Panc1 (cell line): ENCODE measurements at regions of chr11 and their contacts with region 1.

Region 1: DNA sequence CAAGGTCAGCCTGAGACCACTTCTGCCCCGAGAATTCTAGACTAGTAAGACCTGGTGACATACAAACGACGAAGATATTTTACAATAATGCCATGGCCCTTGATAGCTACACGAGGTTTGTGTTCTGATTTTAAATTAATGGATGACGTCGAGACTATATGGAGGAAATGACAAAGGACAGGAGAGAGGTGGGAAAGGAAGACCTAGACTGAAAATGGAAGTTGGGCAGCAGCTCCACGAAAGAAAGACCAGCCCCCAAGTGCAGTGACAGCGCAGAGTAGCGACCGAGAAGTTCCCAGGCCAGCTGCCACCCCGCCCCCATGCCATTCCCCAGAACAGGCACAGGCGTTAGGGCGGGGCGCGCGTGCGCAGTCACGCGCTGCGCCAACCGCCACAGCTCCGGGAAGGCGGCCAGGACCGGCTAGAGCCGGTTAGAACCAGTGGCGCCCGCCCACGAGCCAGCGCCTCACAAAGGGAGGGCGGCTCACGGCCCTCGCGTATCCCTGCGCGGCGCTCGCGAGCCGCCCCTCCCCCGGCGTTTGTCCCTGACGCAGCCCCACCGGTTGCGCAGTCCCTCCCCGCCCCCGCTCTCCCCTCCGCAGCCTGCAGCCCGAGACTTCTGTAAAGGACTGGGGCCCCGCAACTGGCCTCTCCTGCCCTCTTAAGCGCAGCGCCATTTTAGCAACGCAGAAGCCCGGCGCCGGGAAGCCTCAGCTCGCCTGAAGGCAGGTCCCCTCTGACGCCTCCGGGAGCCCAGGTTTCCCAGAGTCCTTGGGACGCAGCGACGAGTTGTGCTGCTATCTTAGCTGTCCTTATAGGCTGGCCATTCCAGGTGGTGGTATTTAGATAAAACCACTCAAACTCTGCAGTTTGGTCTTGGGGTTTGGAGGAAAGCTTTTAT is 1.5 kb upstream of the MALAT1 start:
- DNase-seq: no peak
- ATAC-seq: peak; percentile 80
- H3K4me3 ChIP-seq: peak overlapping the region; percentile 78 to 99
- H3K27ac ChIP-seq: peak overlapping the region; percentile 100
- H3K4me1 ChIP-seq: peaks cover 54% of the 10 kb centered on the region
- H3K27me3 ChIP-seq: no peaks in the 10 kb centered on the region
- CTCF ChIP-seq: no peak

Region 2: GRCh38 chr11:65095974-65096806 is 401.2 kb before region 1 on chr11 and contains the start of gene VPS51:
- CTCF ChIA-PET with region 1: no interaction called
- POLR2A ChIA-PET with region 1: interaction called, 10 read pairs
- in situ Hi-C with region 1: no loop called
- intact Hi-C with region 1: no loop called
- DNase-seq: no peak
- ATAC-seq: peak; percentile 97
- H3K4me3 ChIP-seq: peak within 1 kb of the TSS; percentile 63 to 88
- H3K27ac ChIP-seq: peak within 1 kb of the TSS; percentile 80
- H3K4me1 ChIP-seq: peaks cover 5% of the 10 kb centered on the region
- H3K27me3 ChIP-seq: no peaks in the 10 kb centered on the region
- CTCF ChIP-seq: no peak
- total RNA-seq, gene VPS51: 101 TPM

Region 3: GRCh38 chr11:65134386-65135253 is 362.8 kb before region 1 on chr11 and contains the start of gene SYVN1:
- CTCF ChIA-PET with region 1: no interaction called
- POLR2A ChIA-PET with region 1: interaction called, 10 read pairs
- in situ Hi-C with region 1: no loop called
- intact Hi-C with region 1: no loop called
- DNase-seq: peak; percentile 95
- ATAC-seq: peak; percentile 93
- H3K4me3 ChIP-seq: peak within 1 kb of the TSS; percentile 91 to 96
- H3K27ac ChIP-seq: peak within 1 kb of the TSS; percentile 99
- H3K4me1 ChIP-seq: peaks cover 16% of the 10 kb centered on the region
- H3K27me3 ChIP-seq: no peaks in the 10 kb centered on the region
- CTCF ChIP-seq: no peak
- total RNA-seq, gene SYVN1: 64.3 TPM

Region 4: DNA sequence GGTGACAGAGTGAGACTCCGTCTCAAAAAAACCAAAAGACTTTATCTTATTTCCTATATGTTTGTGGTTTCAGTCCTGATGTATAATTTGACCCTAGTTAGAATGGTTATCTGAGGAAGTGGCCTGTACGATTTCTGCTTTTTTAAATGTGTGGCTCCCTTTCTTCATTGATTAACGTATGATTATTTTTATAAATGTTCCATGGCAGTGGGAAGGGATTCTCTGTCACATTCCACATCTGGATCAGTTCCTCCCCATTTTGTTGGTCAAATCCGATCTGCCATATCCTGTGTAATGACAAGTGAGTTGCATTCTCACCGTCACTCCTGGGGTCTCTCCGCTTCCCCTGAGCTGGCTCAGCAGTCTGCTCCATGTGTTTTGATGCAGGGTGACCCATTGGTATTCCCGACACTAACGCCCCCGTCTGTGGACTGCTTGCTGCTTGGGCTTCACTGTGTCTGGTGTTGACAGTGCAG is 54.5 kb before region 1 on chr11:
- CTCF ChIA-PET with region 1: no interaction called
- POLR2A ChIA-PET with region 1: interaction called, 23 read pairs
- in situ Hi-C with region 1: no loop called
- intact Hi-C with region 1: no loop called
- DNase-seq: no peak
- ATAC-seq: peak; percentile 9; the same call in 1 of the 2 replicates
- H3K4me3 ChIP-seq: no peak overlapping the region
- H3K27ac ChIP-seq: peak overlapping the region; percentile 93
- H3K4me1 ChIP-seq: peaks cover 99% of the 10 kb centered on the region
- H3K27me3 ChIP-seq: no peaks in the 10 kb centered on the region
- CTCF ChIP-seq: no peak

Region 5: DNA sequence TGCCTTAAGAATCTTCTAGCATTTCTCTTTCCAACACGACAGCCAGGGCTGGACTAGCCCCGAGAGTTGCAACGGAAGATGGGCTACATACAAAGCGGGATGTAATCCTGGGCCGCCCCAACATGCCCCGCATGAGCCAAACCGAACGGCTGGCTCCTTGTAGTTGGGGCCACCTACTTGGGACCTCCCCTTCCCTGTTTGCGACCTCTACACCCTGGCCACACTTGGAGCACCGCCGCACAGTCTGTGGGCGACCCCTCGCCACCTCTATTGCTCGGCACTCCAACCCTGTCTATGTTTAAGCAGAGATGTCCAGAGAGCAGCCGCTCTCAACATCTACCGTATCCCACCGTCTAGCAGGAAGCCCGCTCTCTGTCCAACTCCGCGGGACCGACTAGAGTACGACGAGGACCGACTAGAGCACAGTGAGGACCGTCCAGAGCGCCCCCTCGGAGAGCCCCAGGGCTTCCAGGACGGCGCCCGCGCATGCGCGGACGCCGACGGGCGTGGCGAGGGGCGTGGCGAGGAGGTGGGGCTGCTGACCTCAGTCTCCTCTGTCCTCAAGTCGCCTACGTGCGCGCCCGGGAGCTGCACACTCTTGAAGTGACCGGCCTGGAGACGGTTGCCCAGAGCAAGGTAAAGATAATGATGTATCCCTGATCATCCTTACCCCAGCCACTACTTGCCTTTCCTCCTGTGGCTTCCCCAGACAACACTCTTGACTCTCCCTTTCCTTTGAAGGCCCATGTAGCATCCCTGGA is 42.5 kb before region 1 on chr11:
- CTCF ChIA-PET with region 1: no interaction called
- POLR2A ChIA-PET with region 1: interaction called, 15 read pairs
- in situ Hi-C with region 1: no loop called
- intact Hi-C with region 1: no loop called
- DNase-seq: no peak
- ATAC-seq: peak; percentile 96
- H3K4me3 ChIP-seq: peak overlapping the region; percentile 54 to 90
- H3K27ac ChIP-seq: peak overlapping the region; percentile 92
- H3K4me1 ChIP-seq: peaks cover 26% of the 10 kb centered on the region
- H3K27me3 ChIP-seq: no peaks in the 10 kb centered on the region
- CTCF ChIP-seq: no peak

Region 6: DNA sequence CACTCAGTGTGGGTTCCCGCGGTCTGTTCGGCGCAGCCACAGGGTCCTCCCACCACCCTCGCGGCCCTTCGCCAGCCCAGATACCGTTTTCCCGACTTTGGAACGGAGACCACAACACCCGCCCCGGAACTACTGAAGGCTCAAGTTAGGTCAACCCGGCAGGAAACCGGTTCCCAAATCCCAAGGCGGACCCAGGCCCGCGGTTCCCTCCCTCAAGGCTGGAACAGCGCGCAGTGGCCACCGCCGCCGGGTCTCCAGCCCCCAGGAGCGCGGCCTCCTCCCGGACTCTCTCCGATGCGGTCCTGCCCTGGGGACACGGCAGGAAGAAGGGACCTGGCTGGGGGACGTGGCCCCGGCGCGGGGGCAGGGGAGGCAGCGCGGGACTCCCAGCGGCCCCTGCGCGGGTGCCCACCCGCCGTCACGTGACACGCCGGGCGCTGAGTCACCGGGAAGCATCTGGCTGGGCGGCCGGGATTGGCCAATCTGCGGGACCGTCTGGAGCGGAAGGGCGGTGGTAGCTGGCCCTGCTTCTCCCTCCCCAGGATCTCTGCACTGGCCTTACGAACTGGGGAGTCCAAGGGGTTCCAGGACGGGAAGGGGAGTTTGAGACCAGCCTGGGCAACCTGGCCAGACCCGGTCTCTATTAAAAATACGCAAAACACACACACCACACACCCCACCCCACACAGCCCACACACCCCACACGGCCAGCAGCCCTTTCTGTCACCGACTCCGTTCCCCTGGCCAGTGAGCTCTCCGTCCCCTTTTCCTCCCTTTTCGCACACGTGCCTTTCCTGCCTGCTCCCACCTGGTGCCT is 20.0 kb before region 1 on chr11:
- CTCF ChIA-PET with region 1: interaction called, 9 read pairs
- POLR2A ChIA-PET with region 1: interaction called, 818 read pairs
- in situ Hi-C with region 1: no loop called
- intact Hi-C with region 1: no loop called
- DNase-seq: no peak
- ATAC-seq: peak; percentile 80
- H3K4me3 ChIP-seq: peak overlapping the region; percentile 60 to 68
- H3K27ac ChIP-seq: peak overlapping the region; percentile 100
- H3K4me1 ChIP-seq: peaks cover 75% of the 10 kb centered on the region
- H3K27me3 ChIP-seq: no peaks in the 10 kb centered on the region
- CTCF ChIP-seq: no peak